ENCODE measurements at regions of chr18 and their contacts with region 1.

Region 1: DNA sequence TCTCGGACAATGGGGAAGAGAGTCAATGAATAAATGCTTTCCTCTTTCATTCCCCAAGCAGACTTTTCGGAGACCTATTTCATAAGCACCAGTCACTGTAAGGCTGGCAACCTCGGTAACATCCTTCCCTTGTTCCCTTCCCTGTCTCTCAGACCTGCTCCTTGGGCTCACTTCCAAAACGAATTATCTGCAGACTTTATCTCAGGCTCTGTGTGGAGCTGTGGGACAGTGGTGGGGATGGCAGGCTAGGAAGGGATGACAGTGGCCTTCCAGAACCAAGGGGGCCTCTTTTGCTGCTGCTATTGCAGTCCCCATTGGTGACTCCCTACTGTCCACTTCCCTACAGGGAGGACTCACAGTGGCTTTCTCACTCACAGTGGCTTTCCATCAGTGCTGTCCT is 185.6 kb upstream of the MEX3C start:
- DNase-seq: no peak
- ATAC-seq: no peak
- H3K4me3 ChIP-seq: no peak overlapping the region
- H3K27ac ChIP-seq: no peak overlapping the region
- H3K4me1 ChIP-seq: no peaks in the 10 kb centered on the region
- H3K27me3 ChIP-seq: no peaks in the 10 kb centered on the region; a peak in 2 of 4 replicates
- CTCF ChIP-seq: no peak
- EP300 ChIP-seq: no peak
- POLR2A ChIP-seq: no peak
- RAD21 ChIP-seq: no peak

Region 2: GRCh38 chr18:51339856-51340255 is 43.3 kb before region 1 on chr18:
- CTCF ChIA-PET with region 1: interaction called, 4 read pairs
- POLR2A ChIA-PET with region 1: no interaction called
- RAD21 ChIA-PET with region 1: no interaction called
- SMC1A ChIA-PET with region 1: no interaction called
- in situ Hi-C with region 1: loop called (anchors 5 kb)
- intact Hi-C with region 1: no loop called
- DNase-seq: no peak
- ATAC-seq: no peak
- H3K4me3 ChIP-seq: no peak overlapping the region
- H3K27ac ChIP-seq: no peak overlapping the region
- H3K4me1 ChIP-seq: no peaks in the 10 kb centered on the region
- H3K27me3 ChIP-seq: no peaks in the 10 kb centered on the region
- CTCF ChIP-seq: no peak
- EP300 ChIP-seq: no peak
- POLR2A ChIP-seq: no peak
- RAD21 ChIP-seq: no peak

Measured in GM12878 (cell line).